Dendritic cell treated with granulocyte-macrophage colony-stimulating factor and Interleukin-4, amounts not matched to agents 40 ng/mL and 50 ng/mL, for 4 days (primary cell): ENCODE measurements at regions of chr12 and their contacts with region 1.

Region 1: GRCh38 chr12:100311317-100311716 is 44.3 kb downstream of the SCYL2 start:
- H3K4me3 Mint-ChIP-seq: no peak overlapping the region
- H3K27ac Mint-ChIP-seq: no peak overlapping the region
- H3K4me1 Mint-ChIP-seq: no peaks in the 10 kb centered on the region
- H3K27me3 Mint-ChIP-seq: no peaks in the 10 kb centered on the region

Region 2: GRCh38 chr12:100020370-100020769 is 290.9 kb before region 1 on chr12:
- intact Hi-C with region 1: no loop called
- H3K4me3 Mint-ChIP-seq: no peak overlapping the region
- H3K27ac Mint-ChIP-seq: no peak overlapping the region
- H3K4me1 Mint-ChIP-seq: no peaks in the 10 kb centered on the region
- H3K27me3 Mint-ChIP-seq: no peaks in the 10 kb centered on the region

Region 3: GRCh38 chr12:100077367-100077766 is 233.9 kb before region 1 on chr12:
- intact Hi-C with region 1: loop called (anchors 10 kb)
- H3K4me3 Mint-ChIP-seq: no peak overlapping the region
- H3K27ac Mint-ChIP-seq: no peak overlapping the region
- H3K4me1 Mint-ChIP-seq: no peaks in the 10 kb centered on the region
- H3K27me3 Mint-ChIP-seq: no peaks in the 10 kb centered on the region

Region 4: GRCh38 chr12:100251917-100252316 is 59.4 kb before region 1 on chr12:
- intact Hi-C with region 1: no loop called
- H3K4me3 Mint-ChIP-seq: no peak overlapping the region
- H3K27ac Mint-ChIP-seq: no peak overlapping the region
- H3K4me1 Mint-ChIP-seq: peaks cover 13% of the 10 kb centered on the region
- H3K27me3 Mint-ChIP-seq: no peaks in the 10 kb centered on the region